Motor neuron (in vitro differentiated cells): ENCODE measurements at regions of chr1 and their contacts with region 1.

Region 1: GRCh38 chr1:46991083-46991923 is 32.2 kb upstream of the CYP4X1 start:
- ATAC-seq: peak in 3 of 8 experiments; percentile 65 to 84 (median 77)
- H3K4me3 ChIP-seq: no peak overlapping the region
- H3K27ac ChIP-seq: no peak overlapping the region
- H3K4me1 ChIP-seq: no peaks in the 10 kb centered on the region

Region 2: DNA sequence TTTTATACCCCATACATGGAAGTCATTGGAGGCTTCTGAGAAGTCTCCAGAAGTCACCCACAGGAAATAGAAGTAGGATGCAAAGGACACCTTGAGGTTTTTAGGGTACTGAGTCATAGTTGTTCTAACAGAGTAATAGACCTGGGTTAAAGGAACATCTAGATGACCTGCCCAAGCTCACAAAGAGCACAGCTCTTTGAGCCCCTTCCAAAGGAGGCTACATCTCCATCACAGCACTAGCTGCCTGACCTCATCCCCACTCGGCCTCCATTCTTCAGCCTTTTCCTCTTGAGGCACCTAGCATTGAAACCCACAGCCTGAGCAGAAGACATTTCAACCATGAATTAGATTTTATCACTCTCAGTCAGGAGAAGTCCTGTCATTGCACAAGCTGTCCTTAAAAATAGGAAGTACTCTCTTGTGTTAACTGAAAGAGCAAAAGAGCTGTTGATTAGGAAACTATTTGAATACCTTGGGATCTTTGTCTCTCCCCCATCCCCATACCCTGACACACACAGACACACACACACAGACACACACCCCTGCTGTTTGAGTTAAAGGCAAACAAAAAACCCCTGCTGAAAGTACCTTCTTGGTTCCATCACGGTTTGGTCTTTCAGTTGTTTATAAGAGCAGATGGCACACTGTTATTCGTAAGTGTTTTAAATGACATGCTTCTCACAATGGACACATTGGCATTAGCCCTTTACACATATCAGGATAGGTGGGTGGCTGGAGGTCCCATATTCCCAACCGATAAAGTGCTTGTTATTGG is 409.4 kb before region 1 on chr1:
- in situ Hi-C with region 1: no loop called
- ATAC-seq: no peak
- H3K4me3 ChIP-seq: no peak overlapping the region
- H3K27ac ChIP-seq: no peak overlapping the region
- H3K4me1 ChIP-seq: peaks cover 38 to 42% of the 10 kb centered on the region in 2 donors

Region 3: DNA sequence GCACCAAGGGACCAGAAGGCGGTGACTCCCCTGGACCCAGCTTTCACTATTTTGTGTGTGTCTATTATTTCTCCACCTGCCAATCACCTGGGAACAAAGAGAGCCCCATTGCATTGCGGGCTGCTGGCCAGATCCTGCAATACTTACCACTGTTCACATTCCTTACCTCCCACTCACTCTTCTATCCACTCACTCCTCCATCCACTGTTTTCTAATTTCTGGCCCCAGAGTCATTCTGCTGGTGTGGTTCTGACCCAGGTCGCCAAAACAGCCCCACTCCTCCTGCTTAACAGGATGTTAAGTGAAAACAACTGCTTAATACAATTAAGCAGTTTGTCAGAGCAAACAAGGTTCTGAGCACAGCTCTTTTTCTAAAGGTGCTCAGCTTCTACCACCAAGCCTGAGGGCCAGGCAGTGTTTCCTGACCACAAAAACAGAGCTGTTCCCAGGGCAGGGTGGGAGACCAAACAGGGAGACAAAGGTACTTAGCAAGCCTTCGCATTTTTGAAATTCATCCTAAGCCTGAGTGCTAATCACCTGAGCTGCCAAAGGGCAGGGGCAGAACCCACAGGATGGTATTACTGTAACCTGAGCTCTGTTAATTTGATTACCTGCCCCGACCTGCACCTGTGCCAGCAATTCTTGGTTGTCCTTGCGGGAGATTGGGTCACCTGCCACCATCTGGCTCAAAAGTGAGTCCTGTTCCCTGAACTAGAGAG is 233.9 kb before region 1 on chr1:
- in situ Hi-C with region 1: loop called in 1 of 9 experiments (anchors 25 kb)
- ATAC-seq: peak in 1 of 8 experiments; percentile 18
- H3K4me3 ChIP-seq: no peak overlapping the region
- H3K27ac ChIP-seq: no peak overlapping the region
- H3K4me1 ChIP-seq: no peaks in the 10 kb centered on the region

Region 4: GRCh38 chr1:47113178-47113577 is 121.9 kb after region 1 on chr1:
- in situ Hi-C with region 1: no loop called
- ATAC-seq: no peak
- H3K4me3 ChIP-seq: no peak overlapping the region
- H3K27ac ChIP-seq: no peak overlapping the region
- H3K4me1 ChIP-seq: no peaks in the 10 kb centered on the region

Region 5: GRCh38 chr1:48870596-48870995 is 1879.3 kb after region 1 on chr1:
- in situ Hi-C with region 1: no loop called
- ATAC-seq: peak in 4 of 8 experiments; percentile 56 to 79 (median 62)
- H3K4me3 ChIP-seq: no peak overlapping the region
- H3K27ac ChIP-seq: no peak overlapping the region
- H3K4me1 ChIP-seq: peaks cover 12 to 20% of the 10 kb centered on the region in 2 donors